Esophagus muscularis mucosa (tissue), 4 donors: ENCODE measurements at regions of chr12 and their contacts with region 1.

Region 1: DNA sequence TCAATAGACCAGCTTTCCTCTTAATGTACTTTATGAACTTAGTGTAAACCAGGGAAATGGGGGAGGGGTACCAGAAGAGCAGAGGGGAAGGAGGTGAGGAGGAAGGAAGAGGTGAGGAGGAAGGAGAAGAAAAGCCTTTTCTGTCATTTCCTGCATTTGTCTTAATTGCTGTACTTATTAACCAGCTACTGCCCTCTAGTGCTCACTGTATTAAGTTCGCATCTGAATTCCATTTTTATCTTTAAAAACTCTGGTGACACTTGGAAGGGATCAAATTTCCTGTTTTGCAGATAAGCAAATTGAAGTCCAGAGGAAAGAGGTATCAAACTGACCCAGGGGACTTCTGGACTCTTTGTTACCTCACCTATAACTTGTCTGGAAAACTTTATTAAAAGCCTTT is 22.2 kb downstream of the MANSC1 start:
- DNase-seq: no peak
- H3K4me3 ChIP-seq: no peak overlapping the region
- H3K27ac ChIP-seq: no peak overlapping the region
- H3K4me1 ChIP-seq: peaks cover 0 to 5% (median 2%) of the 10 kb centered on the region in 4 donors
- H3K27me3 ChIP-seq: no peaks in the 10 kb centered on the region
- CTCF ChIP-seq: peak; percentile 58 to 70 (median 59)
- EP300 ChIP-seq: no peak
- POLR2A ChIP-seq: no peak

Region 2: GRCh38 chr12:12081836-12082497 is 245.8 kb before region 1 on chr12:
- intact Hi-C with region 1: loop called (anchors 5 kb)
- DNase-seq: peak; percentile 72
- H3K4me3 ChIP-seq: no peak overlapping the region
- H3K27ac ChIP-seq: no peak overlapping the region
- H3K4me1 ChIP-seq: peaks cover 0 to 4% (median 2%) of the 10 kb centered on the region in 4 donors
- H3K27me3 ChIP-seq: no peaks in the 10 kb centered on the region
- CTCF ChIP-seq: peak in 2 of 3 experiments; percentile 18 to 28
- EP300 ChIP-seq: no peak
- POLR2A ChIP-seq: no peak